ENCODE measurements at regions of chr19 and their contacts with region 1.

Region 1: DNA sequence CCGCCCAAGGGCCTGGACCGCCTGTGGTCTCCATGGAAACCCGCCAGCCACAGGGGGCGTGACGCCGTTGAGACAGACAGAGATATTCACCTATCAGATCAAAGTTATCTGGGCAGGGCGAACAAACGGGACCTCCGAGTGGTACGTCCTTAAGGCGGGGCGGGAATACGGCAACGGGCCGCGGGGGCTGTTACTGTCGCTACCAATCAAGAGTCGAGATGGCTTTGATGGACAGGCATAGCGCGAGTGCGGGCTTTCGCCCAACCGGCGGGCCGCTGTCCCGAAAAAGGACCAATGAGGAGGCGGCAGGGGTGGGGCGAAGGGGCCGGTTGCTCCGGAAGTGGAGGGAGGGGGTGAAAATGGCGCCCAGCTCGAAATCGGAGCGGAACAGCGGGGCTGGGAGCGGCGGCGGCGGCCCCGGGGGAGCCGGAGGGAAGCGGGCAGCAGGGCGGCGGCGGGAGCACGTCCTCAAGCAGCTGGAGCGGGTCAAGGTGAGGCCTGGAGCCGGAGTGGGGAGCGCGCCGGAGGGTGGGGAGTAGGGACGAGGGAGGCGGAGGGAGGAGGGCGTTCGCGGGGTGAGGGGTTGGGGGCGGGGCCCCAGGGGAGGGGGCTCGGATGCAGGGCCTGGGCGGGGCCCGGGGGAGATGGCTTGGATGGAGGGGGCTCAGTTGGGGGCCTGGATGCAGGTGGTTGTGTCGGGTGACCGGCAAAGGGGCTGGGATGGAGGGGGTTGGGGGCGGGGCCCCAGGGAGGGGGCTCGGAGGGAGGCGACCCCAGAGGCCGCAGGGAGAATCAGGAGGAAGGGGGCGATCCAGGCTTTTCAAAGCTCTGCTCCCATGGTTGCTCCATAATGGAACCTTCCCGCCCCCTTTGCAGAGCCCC is at the start of gene DCAF15:
- DNase-seq: peak; percentile 100
- H3K4me3 ChIP-seq: peak within 1 kb of the TSS; percentile 82 to 94 (median 94)
- H3K27ac ChIP-seq: peak within 1 kb of the TSS; percentile 83 to 90 (median 87)
- H3K4me1 ChIP-seq: peaks cover 11 to 24% (median 23%) of the 10 kb centered on the region in 4 donors
- H3K27me3 ChIP-seq: no peaks in the 10 kb centered on the region
- CTCF ChIP-seq: no peak
- EP300 ChIP-seq: no peak
- POLR2A ChIP-seq: peak; percentile 16
- total RNA-seq, gene DCAF15: 9.8 to 23.9 (median 13.4) TPM

Region 2: GRCh38 chr19:13905938-13906904 is 46.2 kb before region 1 on chr19 and contains the starts of genes BRME1 and CC2D1A:
- intact Hi-C with region 1: no loop called
- DNase-seq: peak; percentile 95
- H3K4me3 ChIP-seq: peak within 1 kb of the TSS; percentile 77 to 99 (median 90)
- H3K27ac ChIP-seq: peak within 1 kb of the TSS; percentile 68 to 77 (median 76)
- H3K4me1 ChIP-seq: peaks cover 17 to 27% (median 21%) of the 10 kb centered on the region in 4 donors
- H3K27me3 ChIP-seq: peaks cover 0 to 7% (median 0%) of the 10 kb centered on the region in 4 donors
- CTCF ChIP-seq: peak in 1 of 3 experiments; percentile 26
- EP300 ChIP-seq: no peak
- POLR2A ChIP-seq: peak; percentile 45
- total RNA-seq, gene BRME1: 0.42 to 1.1 (median 0.78) TPM
- total RNA-seq, gene CC2D1A: 22.9 to 42.8 (median 33.6) TPM

Region 3: DNA sequence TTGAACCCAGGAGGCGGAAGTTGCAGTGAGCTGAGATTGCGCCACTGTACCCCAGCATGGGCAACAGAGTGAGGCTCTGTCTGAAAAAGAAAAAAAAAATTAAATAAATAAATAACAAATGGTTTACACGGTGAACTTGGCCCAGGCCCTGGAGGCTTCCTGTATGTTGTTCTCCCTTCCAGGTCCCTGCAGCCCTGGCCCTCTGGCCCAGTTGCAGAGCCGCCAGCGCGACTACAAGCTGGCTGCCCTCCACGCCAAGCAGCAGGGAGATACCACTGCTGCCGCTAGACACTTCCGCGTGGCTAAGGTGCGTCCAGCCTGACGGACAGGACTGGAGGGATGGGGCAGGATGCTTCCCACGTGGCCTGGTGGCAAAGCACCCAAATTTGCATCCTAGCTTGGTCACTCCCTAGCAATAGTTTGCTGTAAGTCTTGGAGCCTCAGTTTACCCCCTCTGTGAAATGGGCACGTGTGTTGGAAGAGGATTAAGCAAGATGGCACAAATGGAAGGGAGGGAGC is 34.4 kb before region 1 on chr19:
- intact Hi-C with region 1: no loop called
- DNase-seq: no peak
- H3K4me3 ChIP-seq: no peak overlapping the region
- H3K27ac ChIP-seq: no peak overlapping the region
- H3K4me1 ChIP-seq: no peaks in the 10 kb centered on the region
- H3K27me3 ChIP-seq: no peaks in the 10 kb centered on the region
- CTCF ChIP-seq: no peak
- EP300 ChIP-seq: no peak
- POLR2A ChIP-seq: no peak

Region 4: DNA sequence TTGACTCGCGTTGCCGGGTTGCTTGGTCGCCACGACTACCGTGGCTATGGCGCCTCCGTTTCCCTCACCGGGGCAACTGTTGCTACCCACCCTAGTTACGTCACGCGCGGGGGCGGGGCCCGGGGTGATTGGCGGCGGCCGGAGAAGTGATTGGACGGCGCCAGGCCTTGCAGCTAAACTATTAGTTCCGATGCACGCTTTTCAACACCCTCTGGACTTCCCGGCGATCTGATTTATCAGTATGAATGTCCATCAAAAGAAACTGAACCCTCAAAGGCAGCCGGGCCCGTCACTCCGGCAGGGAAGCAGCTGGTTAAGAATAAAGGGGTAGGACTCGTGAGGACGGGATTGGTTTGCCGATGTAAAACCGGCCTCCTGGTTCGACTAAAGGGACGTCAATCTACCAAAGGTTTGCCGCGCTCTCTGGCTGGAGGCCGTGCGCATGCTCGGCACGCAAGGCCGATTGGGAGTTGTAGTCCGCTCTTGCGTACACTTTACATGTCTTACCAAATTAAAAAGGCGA is 53.9 kb after region 1 on chr19 and contains the start of gene RFX1:
- intact Hi-C with region 1: loop called (anchors 5 kb)
- DNase-seq: peak; percentile 100
- H3K4me3 ChIP-seq: peak within 1 kb of the TSS; percentile 78 to 98 (median 86)
- H3K27ac ChIP-seq: peak within 1 kb of the TSS; percentile 97 to 100 (median 99)
- H3K4me1 ChIP-seq: peaks cover 23 to 41% (median 38%) of the 10 kb centered on the region in 4 donors
- H3K27me3 ChIP-seq: no peaks in the 10 kb centered on the region
- CTCF ChIP-seq: peak in 1 of 3 experiments; percentile 44
- EP300 ChIP-seq: no peak
- POLR2A ChIP-seq: no peak
- total RNA-seq, gene RFX1: 2.9 to 8.9 (median 4.5) TPM

Measured in esophagus muscularis mucosa (tissue), 4 donors.